ENCODE measurements at regions of chr1 and their contacts with region 1.

Region 1: GRCh38 chr1:198258491-198258890 is 101.7 kb downstream of the NEK7 start:
- DNase-seq: no peak
- H3K4me3 Mint-ChIP-seq: peak overlapping the region; percentile 11
- H3K27ac Mint-ChIP-seq: peak overlapping the region; percentile 78
- H3K4me1 Mint-ChIP-seq: peaks cover 50% of the 10 kb centered on the region
- H3K27me3 Mint-ChIP-seq: no peaks in the 10 kb centered on the region

Region 2: DNA sequence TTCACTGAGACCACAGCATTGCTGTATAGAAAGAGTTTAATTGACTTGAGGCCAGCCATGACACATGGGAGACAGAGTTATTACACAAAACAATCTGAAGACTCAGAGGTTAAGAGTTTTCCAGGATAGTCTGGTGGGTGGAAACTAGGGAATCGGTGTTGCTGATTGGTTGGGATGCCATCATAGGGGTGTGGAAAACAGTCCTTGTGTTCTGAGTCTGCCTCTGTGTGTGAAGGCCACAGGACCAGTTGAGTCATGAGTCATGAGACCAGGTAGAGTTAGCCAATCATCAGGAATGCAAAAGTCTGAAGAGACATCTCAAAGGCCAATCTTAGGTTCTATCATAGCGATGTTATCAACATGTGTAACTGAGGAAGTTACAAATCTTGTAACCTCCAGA is 151.4 kb before region 1 on chr1:
- intact Hi-C with region 1: no loop called
- DNase-seq: no peak
- H3K4me3 Mint-ChIP-seq: no peak overlapping the region
- H3K27ac Mint-ChIP-seq: no peak overlapping the region
- H3K4me1 Mint-ChIP-seq: peaks cover 14% of the 10 kb centered on the region
- H3K27me3 Mint-ChIP-seq: no peaks in the 10 kb centered on the region

Region 3: GRCh38 chr1:198167436-198167934 is 91.0 kb before region 1 on chr1:
- intact Hi-C with region 1: loop called (anchors 1 kb)
- DNase-seq: peak; percentile 20
- H3K4me3 Mint-ChIP-seq: peak overlapping the region; percentile 56
- H3K27ac Mint-ChIP-seq: peak overlapping the region; percentile 91
- H3K4me1 Mint-ChIP-seq: peaks cover 78% of the 10 kb centered on the region
- H3K27me3 Mint-ChIP-seq: no peaks in the 10 kb centered on the region

Region 4: DNA sequence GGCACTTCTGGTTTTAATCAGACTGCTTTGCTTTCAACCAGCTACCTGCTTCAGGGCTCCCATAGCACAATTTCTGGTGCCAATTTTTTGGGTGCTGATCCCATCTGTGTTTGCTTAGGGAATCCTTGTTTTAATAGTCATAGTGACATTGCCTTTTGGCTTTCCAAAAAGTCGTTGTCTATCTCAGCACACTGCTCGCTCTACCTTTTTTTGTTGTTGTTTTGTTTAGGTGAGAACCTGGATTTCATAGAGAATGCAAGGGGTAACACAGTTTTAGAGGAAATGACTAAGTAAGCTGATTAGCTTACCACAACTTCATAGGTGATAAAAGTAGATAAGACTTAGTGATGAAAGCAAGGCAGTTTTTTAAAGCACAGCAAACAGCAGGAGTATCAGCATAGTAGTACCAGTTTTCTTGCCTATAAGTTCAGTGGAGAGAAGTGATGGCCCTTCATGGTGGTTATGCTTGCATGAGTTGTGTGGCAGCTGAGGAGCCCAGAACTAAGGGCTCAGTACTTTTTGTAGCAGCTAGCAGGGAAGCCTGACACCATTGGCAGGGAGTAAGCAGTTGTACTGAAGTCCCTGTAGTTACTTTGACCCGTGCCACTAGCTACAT is 70.4 kb before region 1 on chr1:
- intact Hi-C with region 1: loop called (anchors 1 kb)
- DNase-seq: no peak
- H3K4me3 Mint-ChIP-seq: peak overlapping the region; percentile 49
- H3K27ac Mint-ChIP-seq: peak overlapping the region; percentile 78
- H3K4me1 Mint-ChIP-seq: peaks cover 67% of the 10 kb centered on the region
- H3K27me3 Mint-ChIP-seq: no peaks in the 10 kb centered on the region

Region 5: DNA sequence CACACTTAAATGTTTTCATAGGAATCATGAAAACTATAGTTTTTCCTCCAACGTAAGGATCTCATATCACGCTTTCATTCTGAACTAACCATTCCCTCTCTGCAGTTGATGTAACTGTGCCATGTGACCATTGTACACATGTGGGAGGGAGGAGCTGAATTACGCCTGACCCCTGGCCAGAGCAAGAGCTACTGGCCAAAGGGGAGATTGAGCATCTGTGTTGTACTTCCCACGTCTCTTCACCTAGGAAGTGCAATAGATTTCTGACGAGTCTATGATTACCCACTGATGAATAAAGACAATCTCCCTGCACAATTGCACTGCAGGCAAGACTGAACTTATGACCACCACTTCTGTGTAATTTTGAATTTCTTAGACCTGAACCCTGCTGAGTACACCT is 404.3 kb after region 1 on chr1:
- intact Hi-C with region 1: loop called (anchors 2 kb)
- DNase-seq: no peak
- H3K4me3 Mint-ChIP-seq: peak overlapping the region; percentile 75
- H3K27ac Mint-ChIP-seq: peak overlapping the region; percentile 68
- H3K4me1 Mint-ChIP-seq: peaks cover 81% of the 10 kb centered on the region
- H3K27me3 Mint-ChIP-seq: no peaks in the 10 kb centered on the region

Measured in activated T-helper 1 cell treated with anti-CD3 and anti-CD28 coated beads, Interleukin-12 subunit alpha, Interleukin-12 subunit beta, Interleukin-2, Interleukin-4 antibody, amounts not matched to agents 30 ng/mL and 10 ng/mL and 1 ng/mL, durations not matched to agents 14 hours and 24 hours and 36 hours (primary cell).